Common myeloid progenitor, CD34-positive (primary cell): ENCODE measurements at regions of chr15 and their contacts with region 1.

Region 1: GRCh38 chr15:63135804-63136203 is 14.1 kb downstream of the LACTB start:
- DNase-seq: peak; percentile 46 to 77 (median 76)
- H3K4me3 ChIP-seq: no peak overlapping the region
- H3K27ac ChIP-seq: peak overlapping the region in 1 of 2 experiments; percentile 45
- H3K4me1 ChIP-seq: peaks cover 0 to 11% (median 2%) of the 10 kb centered on the region in 4 experiments
- H3K27me3 ChIP-seq: no peaks in the 10 kb centered on the region

Region 2: GRCh38 chr15:63146669-63147068 is 10.9 kb after region 1 on chr15:
- CTCF ChIA-PET with region 1: interaction called, 18 read pairs
- POLR2A ChIA-PET with region 1: interaction called, 4 read pairs
- DNase-seq: peak in 2 of 3 donors; percentile 32 to 39
- H3K4me3 ChIP-seq: no peak overlapping the region
- H3K27ac ChIP-seq: no peak overlapping the region
- H3K4me1 ChIP-seq: peaks cover 0 to 7% (median 3%) of the 10 kb centered on the region in 4 experiments
- H3K27me3 ChIP-seq: no peaks in the 10 kb centered on the region